OCI-LY7 (cell line): ENCODE measurements at regions of chr7 and their contacts with region 1.

Region 1: DNA sequence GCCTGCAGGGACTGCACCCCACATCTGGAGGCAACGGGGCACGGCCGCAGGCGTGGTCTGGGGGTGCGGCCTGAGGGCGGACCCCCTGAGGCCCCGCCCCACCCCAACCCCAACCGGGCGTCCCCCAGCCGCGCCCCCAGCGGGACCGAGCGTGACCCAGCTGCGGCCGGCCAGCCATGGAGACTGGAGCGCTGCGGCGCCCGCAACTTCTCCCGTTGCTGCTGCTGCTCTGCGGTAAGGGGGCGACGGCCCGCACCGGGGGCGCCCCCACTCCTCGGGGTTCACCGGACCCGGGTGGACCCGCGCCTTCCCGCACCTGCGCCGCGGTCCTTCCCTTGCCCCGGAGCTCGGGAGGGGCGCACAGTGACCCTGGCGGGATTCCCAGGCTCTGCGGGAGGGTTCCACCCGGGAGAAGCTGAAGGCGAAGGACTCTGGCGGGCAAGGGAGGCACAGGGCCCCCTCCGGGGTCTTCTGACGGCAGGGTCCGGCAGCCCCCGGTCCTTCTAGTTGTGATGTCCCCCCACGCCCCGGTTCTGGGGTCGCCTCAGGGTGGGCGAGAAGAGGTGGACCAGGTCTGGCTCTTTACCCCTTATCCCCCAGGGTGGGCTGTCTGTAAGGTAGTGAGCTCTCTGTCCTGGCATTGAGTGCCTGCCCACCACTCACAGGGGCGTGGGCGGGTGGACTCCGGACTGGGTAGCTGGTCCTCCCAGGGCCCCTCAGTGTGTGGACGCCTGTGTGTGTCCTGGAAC is at the start of gene RAMP3:
- DNase-seq: no peak
- H3K4me3 ChIP-seq: no peak within 1 kb of the TSS
- H3K27ac ChIP-seq: no peak within 1 kb of the TSS
- H3K4me1 ChIP-seq: peaks cover 6% of the 10 kb centered on the region
- CTCF ChIP-seq: no peak
- total RNA-seq, gene RAMP3: not detected in 2 replicates

Region 2: GRCh38 chr7:45171946-45172345 is 14.1 kb after region 1 on chr7:
- CTCF ChIA-PET with region 1: no interaction called
- POLR2A ChIA-PET with region 1: no interaction called
- intact Hi-C with region 1: no loop called
- DNase-seq: no peak
- H3K4me3 ChIP-seq: no peak overlapping the region
- H3K27ac ChIP-seq: no peak overlapping the region
- H3K4me1 ChIP-seq: no peaks in the 10 kb centered on the region
- CTCF ChIP-seq: no peak

Region 3: DNA sequence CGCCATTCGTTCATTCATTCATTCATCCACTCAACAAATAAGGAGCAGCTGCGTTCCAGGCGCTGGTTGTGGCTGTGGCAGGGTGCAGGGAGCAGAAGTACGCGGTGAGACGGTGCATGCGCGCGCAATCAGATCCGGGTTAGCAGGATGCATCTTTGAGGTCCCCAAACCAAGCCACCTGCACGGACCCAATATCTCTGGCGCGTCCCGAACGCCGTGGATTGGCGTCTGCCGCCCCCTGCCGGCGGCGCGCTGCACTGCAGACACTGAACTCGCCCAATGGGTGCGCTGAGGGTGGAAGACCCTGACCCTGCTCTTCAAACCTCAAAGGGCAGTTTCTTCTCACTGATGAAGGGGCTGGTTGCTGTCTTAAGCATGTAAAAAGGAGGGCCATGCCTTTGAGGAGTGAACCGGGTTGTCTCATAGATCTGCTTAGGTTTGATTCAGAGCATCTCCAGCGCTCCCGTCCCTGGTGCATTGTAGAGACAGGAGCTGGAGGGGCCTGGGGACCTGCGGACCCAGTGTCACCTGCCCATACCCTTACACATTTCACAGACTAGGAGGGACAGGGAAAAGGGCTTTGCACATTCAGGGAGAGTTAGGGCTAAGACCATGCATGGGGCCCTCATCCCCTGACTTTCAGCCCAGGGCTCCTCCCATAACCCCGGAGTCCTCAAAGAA is 102.3 kb after region 1 on chr7:
- CTCF ChIA-PET with region 1: no interaction called
- POLR2A ChIA-PET with region 1: no interaction called
- intact Hi-C with region 1: loop called (anchors 1 kb)
- DNase-seq: peak; percentile 61
- H3K4me3 ChIP-seq: no peak overlapping the region
- H3K27ac ChIP-seq: no peak overlapping the region
- H3K4me1 ChIP-seq: peaks cover 12% of the 10 kb centered on the region
- CTCF ChIP-seq: peak; percentile 99